ENCODE measurements at regions of chr11 and their contacts with region 1.

Region 1: DNA sequence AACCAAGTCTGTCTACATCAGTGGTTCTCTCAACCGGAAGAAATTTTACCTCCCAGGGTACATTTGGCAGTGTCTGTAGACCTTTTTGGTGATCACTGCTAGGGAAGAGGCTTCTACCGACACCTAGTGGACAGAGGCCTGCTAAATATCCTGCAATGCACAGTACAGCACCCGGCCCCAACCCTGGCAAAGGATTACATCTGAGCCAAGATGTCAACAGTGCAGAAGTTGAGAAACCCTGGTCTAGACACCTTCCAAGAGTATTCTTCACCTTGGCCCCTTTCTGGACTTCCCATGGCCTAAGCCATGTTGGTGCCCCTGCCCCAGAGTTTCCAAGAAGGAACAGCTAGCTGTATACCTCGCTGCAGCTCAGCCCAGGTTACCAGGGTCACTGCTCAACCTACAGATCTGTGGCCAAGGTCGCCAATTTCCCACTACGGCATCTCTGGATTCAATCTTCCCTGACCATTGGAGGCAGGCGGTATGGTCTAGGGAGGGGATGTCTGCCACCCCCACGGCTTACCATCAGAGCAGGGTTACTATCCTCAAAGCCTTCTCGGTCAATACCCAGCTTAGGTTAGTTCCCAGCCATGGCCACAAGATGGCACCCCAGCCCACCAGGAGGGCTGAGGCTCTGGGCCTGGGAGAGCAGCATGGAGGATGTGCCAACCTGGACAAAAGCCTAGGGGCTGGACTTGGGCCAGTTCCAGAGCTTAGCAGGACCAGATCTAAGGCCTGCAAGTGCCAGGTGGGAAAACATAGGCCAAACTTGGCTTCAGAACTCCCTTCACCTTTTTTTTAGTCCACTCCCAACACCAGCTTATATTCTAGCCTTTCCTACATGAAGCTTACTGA is 3.7 kb upstream of the KCNC1 start:
- DNase-seq: peak; percentile 83 to 92
- H3K4me3 ChIP-seq: no peak overlapping the region
- H3K27ac ChIP-seq: no peak overlapping the region
- H3K4me1 ChIP-seq: no peaks in the 10 kb centered on the region
- H3K27me3 ChIP-seq: peaks cover 2 to 10% of the 10 kb centered on the region in 2 donors
- CTCF ChIP-seq: peak; percentile 57 to 90 (median 90)
- POLR2A ChIP-seq: no peak

Region 2: GRCh38 chr11:16440136-16440535 is 1290.7 kb before region 1 on chr11:
- intact Hi-C with region 1: no loop called
- DNase-seq: no peak
- H3K4me3 ChIP-seq: no peak overlapping the region
- H3K27ac ChIP-seq: no peak overlapping the region
- H3K4me1 ChIP-seq: no peaks in the 10 kb centered on the region
- H3K27me3 ChIP-seq: no peaks in the 10 kb centered on the region
- CTCF ChIP-seq: no peak
- POLR2A ChIP-seq: no peak

Region 3: DNA sequence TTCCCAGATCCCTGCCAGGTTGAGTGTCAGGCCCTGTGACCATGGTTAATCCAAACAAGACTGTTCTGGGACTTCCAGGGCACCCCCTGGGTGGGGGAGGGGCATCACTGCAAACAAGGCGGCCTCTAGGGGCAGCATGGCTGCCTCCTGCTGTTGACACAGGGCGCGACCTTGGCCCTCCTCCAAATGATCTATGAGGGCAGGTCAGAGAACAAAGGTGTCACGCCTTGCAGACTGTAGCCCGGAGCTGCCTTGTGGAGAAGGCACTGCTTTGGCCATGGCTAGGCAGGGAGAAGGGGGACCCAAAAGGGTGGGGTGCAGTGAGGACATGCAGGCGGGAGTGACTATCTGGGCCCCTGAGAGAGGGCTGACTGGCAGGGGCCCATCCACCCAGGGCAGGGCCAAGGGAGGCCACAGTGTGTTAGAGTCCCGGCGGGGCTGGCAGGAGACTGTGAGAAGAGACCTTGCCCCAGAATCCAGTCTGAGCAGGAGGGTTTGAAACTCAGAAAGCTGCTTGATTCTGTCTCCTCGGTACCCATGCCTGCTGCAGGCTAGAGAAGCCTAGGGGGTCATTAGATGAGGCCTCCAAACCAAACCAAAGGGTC is 39.3 kb after region 1 on chr11:
- intact Hi-C with region 1: no loop called
- DNase-seq: peak in 1 of 2 donors; percentile 59
- H3K4me3 ChIP-seq: no peak overlapping the region
- H3K27ac ChIP-seq: no peak overlapping the region
- H3K4me1 ChIP-seq: no peaks in the 10 kb centered on the region
- H3K27me3 ChIP-seq: no peaks in the 10 kb centered on the region
- CTCF ChIP-seq: no peak
- POLR2A ChIP-seq: no peak

Region 4: DNA sequence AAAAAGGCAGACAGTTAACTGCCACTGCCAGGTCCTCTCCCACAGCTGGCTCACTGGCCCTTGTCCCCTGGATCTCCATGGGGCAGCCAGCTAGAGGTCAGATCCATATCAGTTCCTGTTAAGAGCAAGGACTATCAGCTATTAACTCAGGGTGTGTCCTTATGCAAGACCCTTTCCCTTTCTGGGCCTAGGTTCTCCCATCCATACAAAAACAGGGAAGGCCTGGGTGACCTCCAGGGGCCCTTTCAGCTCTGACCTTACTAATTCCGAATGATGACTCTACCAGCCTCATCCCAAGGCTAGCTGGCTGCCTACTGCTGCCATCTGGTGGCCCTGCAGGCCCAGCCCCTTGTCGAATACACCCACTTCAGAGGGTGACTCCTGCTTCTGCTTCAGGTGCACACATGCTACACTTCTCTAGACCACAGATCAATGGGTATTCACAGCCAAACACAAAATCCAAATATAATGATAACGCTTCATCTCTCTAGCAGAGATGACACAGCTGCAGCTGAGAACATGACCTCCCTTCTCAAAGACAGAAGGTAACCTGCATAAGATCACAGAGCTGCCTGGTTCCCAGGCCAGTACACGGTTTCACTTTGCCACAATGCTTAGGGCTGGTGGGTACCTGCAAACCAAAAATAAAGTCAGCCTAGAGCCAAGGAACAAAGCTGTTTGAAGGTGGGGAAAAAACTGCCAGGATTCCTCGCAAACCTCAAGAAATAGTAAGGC is 247.9 kb after region 1 on chr11:
- intact Hi-C with region 1: loop called (anchors 5 kb)
- DNase-seq: no peak
- H3K4me3 ChIP-seq: no peak overlapping the region
- H3K27ac ChIP-seq: no peak overlapping the region
- H3K4me1 ChIP-seq: no peaks in the 10 kb centered on the region
- H3K27me3 ChIP-seq: no peaks in the 10 kb centered on the region
- CTCF ChIP-seq: peak in 2 of 3 donors; percentile 43 to 50
- POLR2A ChIP-seq: no peak

Region 5: GRCh38 chr11:18594999-18595749 is 864.3 kb after region 1 on chr11:
- intact Hi-C with region 1: no loop called
- DNase-seq: no peak
- H3K4me3 ChIP-seq: no peak overlapping the region
- H3K27ac ChIP-seq: no peak overlapping the region
- H3K4me1 ChIP-seq: peaks cover 0 to 6% of the 10 kb centered on the region in 2 donors
- H3K27me3 ChIP-seq: no peaks in the 10 kb centered on the region
- CTCF ChIP-seq: no peak
- POLR2A ChIP-seq: no peak

Region 6: DNA sequence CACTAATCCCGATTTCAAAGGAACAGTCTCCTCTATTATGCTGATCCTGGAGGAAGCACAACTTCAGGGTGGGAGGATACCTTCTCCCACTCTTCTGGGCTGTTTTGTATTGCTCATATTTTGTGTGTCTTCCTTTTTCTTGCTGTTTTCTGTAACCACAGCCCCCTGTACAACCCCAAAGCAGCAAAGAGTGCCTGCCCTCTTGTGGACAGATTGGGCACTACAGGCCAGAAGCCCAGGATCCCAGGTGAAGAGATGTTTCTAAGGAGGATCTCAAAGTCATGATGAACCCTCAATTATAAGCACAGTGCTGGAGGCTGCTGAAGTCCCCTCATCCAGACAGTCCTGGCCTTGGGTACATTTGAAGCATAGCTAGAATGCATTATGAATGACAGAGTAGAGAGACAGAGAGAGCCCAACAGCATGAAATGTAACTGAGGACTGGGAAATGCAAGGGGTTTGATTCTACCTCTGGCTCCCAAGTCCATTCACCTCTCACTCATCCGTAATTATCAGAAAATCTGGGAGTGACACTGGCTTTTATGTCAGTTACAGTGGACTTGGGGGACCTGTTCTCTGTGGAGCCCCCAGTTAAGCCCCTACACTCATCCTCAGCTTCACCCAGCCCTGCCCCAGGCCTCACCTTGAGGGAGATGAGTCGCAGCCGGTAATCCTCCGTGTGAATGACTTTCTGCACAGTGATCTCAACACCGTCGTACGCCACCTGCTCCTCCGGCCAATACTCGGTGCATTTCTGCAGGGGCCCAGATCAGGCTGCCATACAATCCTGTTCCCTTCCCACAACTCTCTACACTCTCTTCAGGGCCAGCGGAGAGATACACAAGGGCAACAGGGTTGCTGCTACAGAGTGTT is 1001.4 kb after region 1 on chr11:
- intact Hi-C with region 1: no loop called
- DNase-seq: peak in 1 of 2 donors; percentile 34
- H3K4me3 ChIP-seq: no peak overlapping the region
- H3K27ac ChIP-seq: no peak overlapping the region
- H3K4me1 ChIP-seq: no peaks in the 10 kb centered on the region
- H3K27me3 ChIP-seq: no peaks in the 10 kb centered on the region
- CTCF ChIP-seq: peak; percentile 87 to 93 (median 90)
- POLR2A ChIP-seq: no peak